ENCODE measurements at regions of chr12 and their contacts with region 1.

Region 1: GRCh38 chr12:31682136-31682962 is 22.9 kb downstream of the ETFBKMT start:
- DNase-seq: peak; percentile 95
- H3K4me3 ChIP-seq: no peak overlapping the region
- H3K27ac ChIP-seq: peak overlapping the region; percentile 56
- H3K4me1 ChIP-seq: peaks cover 34% of the 10 kb centered on the region
- CTCF ChIP-seq: peak; percentile 92

Region 2: GRCh38 chr12:31768046-31768445 is 85.7 kb after region 1 on chr12:
- CTCF ChIA-PET with region 1: no interaction called
- POLR2A ChIA-PET with region 1: no interaction called
- intact Hi-C with region 1: loop called (anchors 1 kb)
- DNase-seq: peak; percentile 68
- H3K4me3 ChIP-seq: no peak overlapping the region
- H3K27ac ChIP-seq: no peak overlapping the region
- H3K4me1 ChIP-seq: peaks cover 11% of the 10 kb centered on the region
- CTCF ChIP-seq: no peak; the same call in 1 of the 2 replicates

Region 3: GRCh38 chr12:31959161-31959700 is 276.9 kb after region 1 on chr12 and contains the start of gene RESF1:
- CTCF ChIA-PET with region 1: no interaction called
- POLR2A ChIA-PET with region 1: interaction called, 3 read pairs
- intact Hi-C with region 1: loop called (anchors 1 kb)
- DNase-seq: peak; percentile 97
- H3K4me3 ChIP-seq: peak within 1 kb of the TSS; percentile 78
- H3K27ac ChIP-seq: peak within 1 kb of the TSS; percentile 87
- H3K4me1 ChIP-seq: peaks cover 28% of the 10 kb centered on the region
- CTCF ChIP-seq: no peak
- total RNA-seq, gene RESF1: 53.3 and 70.4 TPM in 2 replicates

Region 4: DNA sequence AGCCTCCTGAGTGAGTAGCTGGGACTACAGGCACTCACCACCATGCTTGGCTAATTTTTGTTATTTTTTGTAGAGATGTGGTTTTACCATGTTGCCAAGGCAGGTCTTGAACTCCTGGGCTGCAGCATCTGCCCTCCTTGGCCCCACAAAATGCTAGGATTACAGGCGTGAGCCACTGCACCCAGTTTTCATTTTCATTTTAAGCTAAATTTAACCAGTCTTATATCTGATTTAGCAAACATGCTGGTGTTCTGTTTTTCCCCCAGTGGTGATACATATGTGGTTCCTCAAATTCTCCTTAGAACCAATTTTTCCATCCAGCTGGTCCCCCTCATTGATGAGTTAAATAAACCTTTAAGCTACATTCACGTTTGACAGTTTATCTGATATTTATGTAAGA is 380.5 kb after region 1 on chr12:
- CTCF ChIA-PET with region 1: no interaction called
- POLR2A ChIA-PET with region 1: no interaction called
- intact Hi-C with region 1: loop called (anchors 1 kb)
- DNase-seq: peak; percentile 48
- H3K4me3 ChIP-seq: no peak overlapping the region
- H3K27ac ChIP-seq: peak overlapping the region; percentile 15
- H3K4me1 ChIP-seq: peaks cover 24% of the 10 kb centered on the region
- CTCF ChIP-seq: peak; percentile 20; the same call in 1 of the 2 replicates

Measured in OCI-LY7 (cell line).